ENCODE measurements at regions of chr1 and their contacts with region 1.

Region 1: DNA sequence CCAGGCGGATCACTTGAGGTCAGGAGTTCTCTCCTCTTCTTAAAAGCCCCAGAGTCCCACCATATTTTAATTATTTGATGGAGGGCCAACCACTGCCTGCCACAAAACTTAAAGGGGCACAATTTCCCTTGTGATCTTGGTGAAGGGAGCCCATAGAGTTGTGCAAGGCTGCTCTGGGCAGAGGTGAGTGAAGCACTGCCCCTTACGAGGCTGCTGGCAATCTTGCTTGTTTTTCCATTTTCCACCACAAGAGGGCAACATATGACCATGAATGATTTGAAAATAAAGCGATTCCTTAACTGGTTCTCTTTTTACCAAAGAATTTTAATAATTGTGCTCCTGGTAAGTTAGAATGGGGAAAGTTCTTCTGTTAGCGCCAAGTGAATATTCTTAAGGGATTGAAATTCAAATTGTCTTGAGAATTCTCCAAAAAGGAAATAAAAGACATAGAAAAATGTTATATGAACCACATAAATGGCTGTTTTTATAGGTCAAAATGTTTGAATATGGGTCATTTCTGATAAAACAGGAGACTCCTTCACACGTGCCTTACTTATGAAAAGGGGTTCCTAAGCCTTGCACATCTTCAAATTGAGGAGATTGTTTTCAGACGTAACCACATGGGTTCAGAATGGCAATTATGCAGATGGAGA is 22.7 kb downstream of the PGM1 start:
- DNase-seq: peak; percentile 68
- ATAC-seq: peak; percentile 64
- H3K4me3 Mint-ChIP-seq: no peak overlapping the region
- H3K27ac Mint-ChIP-seq: no peak overlapping the region
- H3K4me1 Mint-ChIP-seq: no peaks in the 10 kb centered on the region
- H3K27me3 Mint-ChIP-seq: no peaks in the 10 kb centered on the region

Region 2: GRCh38 chr1:64136752-64137411 is 521.0 kb after region 1 on chr1:
- CTCF ChIA-PET with region 1: interaction called, 14 read pairs
- DNase-seq: peak; percentile 71
- ATAC-seq: peak; percentile 55
- H3K4me3 Mint-ChIP-seq: no peak overlapping the region
- H3K27ac Mint-ChIP-seq: no peak overlapping the region
- H3K4me1 Mint-ChIP-seq: no peaks in the 10 kb centered on the region
- H3K27me3 Mint-ChIP-seq: peaks cover 8% of the 10 kb centered on the region

Measured in activated CD8-positive, alpha-beta memory T cell treated with anti-CD3 and anti-CD28 coated beads, Interleukin-2, amount 10 ng/mL, durations not matched to agents 7 days and 5 days (primary cell).